Heart right ventricle (tissue), 16 donors: ENCODE measurements at regions of chr6 and their contacts with region 1.

Region 1: DNA sequence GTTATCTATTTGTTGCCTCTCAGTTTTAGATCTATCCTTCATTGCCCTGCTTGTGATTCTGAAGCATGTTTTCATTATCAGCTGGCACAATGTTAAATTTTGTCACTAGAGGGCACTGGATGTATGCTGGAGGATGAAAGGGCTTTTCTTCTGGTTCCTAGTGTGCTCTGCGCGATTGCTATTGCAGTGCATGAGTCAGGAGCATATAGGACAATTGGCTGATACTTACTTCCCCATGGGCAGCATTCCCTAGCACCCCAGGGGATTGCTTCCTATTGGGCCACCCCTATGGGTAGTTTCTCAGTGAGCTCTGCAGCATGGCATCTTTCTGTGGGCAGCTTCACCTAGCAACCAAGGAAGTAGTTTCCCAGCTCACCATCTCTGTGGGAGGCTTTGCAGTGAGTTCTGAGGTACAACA is 280.3 kb upstream of the SYNCRIP start:
- DNase-seq: no peak
- ATAC-seq: peak in 6 of 8 donors; percentile 29 to 69 (median 52)
- H3K4me3 ChIP-seq: no peak overlapping the region
- H3K27ac ChIP-seq: no peak overlapping the region
- H3K4me1 ChIP-seq: no peaks in the 10 kb centered on the region
- H3K27me3 ChIP-seq: no peaks in the 10 kb centered on the region
- CTCF ChIP-seq: peak; percentile 12 to 66 (median 54)

Region 2: GRCh38 chr6:85756982-85757381 is 166.0 kb before region 1 on chr6:
- intact Hi-C with region 1: loop called in 1 of 10 experiments (anchors 5 kb)
- DNase-seq: no peak
- ATAC-seq: no peak
- H3K4me3 ChIP-seq: no peak overlapping the region
- H3K27ac ChIP-seq: no peak overlapping the region
- H3K4me1 ChIP-seq: no peaks in the 10 kb centered on the region
- H3K27me3 ChIP-seq: no peaks in the 10 kb centered on the region
- CTCF ChIP-seq: peak; percentile 14 to 59 (median 48)

Region 3: GRCh38 chr6:86407128-86407527 is 484.1 kb after region 1 on chr6:
- intact Hi-C with region 1: no loop called
- DNase-seq: no peak
- ATAC-seq: no peak
- H3K4me3 ChIP-seq: no peak overlapping the region
- H3K27ac ChIP-seq: no peak overlapping the region
- H3K4me1 ChIP-seq: no peaks in the 10 kb centered on the region
- H3K27me3 ChIP-seq: no peaks in the 10 kb centered on the region
- CTCF ChIP-seq: no peak

Region 4: GRCh38 chr6:86856937-86857563 is 934.0 kb after region 1 on chr6:
- intact Hi-C with region 1: loop called in 4 of 10 experiments (anchors 5 to 10 kb)
- DNase-seq: peak in 1 of 2 donors; percentile 9
- ATAC-seq: no peak
- H3K4me3 ChIP-seq: no peak overlapping the region
- H3K27ac ChIP-seq: no peak overlapping the region
- H3K4me1 ChIP-seq: peaks cover 0 to 2% (median 0%) of the 10 kb centered on the region in 9 donors
- H3K27me3 ChIP-seq: no peaks in the 10 kb centered on the region
- CTCF ChIP-seq: peak; percentile 39 to 79 (median 67)

Region 5: DNA sequence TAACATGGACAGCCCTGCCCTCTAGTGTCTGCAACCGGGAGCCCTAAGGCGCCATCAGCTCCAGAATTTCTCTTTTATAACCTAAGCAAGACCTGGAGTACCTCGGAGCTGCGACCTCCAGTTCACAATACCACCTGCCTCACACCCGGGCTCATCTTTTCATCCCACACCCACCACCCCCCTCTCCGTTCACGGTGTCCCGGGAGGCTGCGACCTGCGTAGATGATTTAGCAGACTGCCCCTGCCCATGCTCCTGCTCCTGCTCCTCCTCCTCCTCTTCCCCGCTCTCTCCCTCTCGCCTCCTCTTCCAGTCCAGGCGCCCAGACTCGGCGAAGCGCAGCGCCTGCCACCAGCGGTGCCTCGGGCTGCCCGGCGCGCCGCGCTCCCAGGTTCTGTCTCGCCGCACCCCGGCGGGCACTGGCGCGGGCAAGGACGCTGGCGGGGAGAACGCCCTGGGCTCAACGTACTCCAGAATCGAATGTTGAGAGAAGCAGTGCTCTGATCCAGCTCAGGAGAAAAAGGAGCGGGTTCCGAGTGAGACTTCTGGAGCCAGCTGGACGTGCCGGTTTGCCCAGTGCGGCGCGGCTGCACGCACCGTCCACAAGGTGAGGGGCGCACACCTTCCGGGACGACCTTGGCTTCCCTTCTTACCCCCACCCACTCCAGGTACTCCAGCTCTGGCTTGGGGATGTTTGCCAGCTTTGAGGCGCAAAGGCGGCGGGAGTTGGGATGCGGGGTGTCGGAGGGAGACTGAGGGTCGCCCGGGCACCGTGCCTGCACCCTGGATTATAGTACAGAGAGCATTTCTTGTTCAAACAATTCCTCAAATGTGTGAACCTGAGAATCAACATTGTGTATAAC is 1014.4 kb after region 1 on chr6 and contains the start of gene HTR1E:
- intact Hi-C with region 1: loop called in 2 of 10 experiments (anchors 5 kb)
- DNase-seq: no peak
- ATAC-seq: peak in 5 of 8 donors; percentile 47 to 69 (median 57)
- H3K4me3 ChIP-seq: peak within 1 kb of the TSS in 6 of 10 donors; percentile 12 to 34 (median 23)
- H3K27ac ChIP-seq: no peak within 1 kb of the TSS
- H3K4me1 ChIP-seq: peaks cover 0 to 7% (median 0%) of the 10 kb centered on the region in 9 donors
- H3K27me3 ChIP-seq: peaks cover 5 to 64% (median 36%) of the 10 kb centered on the region in 7 donors
- CTCF ChIP-seq: peak in 7 of 9 donors; percentile 7 to 59 (median 48)
- total RNA-seq, gene HTR1E: not detected

Region 6: GRCh38 chr6:87029711-87030314 is 1106.8 kb after region 1 on chr6:
- intact Hi-C with region 1: loop called in 1 of 10 experiments (anchors 5 kb)
- DNase-seq: no peak
- ATAC-seq: no peak
- H3K4me3 ChIP-seq: no peak overlapping the region
- H3K27ac ChIP-seq: no peak overlapping the region
- H3K4me1 ChIP-seq: no peaks in the 10 kb centered on the region
- H3K27me3 ChIP-seq: no peaks in the 10 kb centered on the region
- CTCF ChIP-seq: peak in 7 of 9 donors; percentile 30 to 63 (median 51)